Right ventricle myocardium inferior (tissue), 1 donor: ENCODE measurements at regions of chr13 and their contacts with region 1.

Region 1: DNA sequence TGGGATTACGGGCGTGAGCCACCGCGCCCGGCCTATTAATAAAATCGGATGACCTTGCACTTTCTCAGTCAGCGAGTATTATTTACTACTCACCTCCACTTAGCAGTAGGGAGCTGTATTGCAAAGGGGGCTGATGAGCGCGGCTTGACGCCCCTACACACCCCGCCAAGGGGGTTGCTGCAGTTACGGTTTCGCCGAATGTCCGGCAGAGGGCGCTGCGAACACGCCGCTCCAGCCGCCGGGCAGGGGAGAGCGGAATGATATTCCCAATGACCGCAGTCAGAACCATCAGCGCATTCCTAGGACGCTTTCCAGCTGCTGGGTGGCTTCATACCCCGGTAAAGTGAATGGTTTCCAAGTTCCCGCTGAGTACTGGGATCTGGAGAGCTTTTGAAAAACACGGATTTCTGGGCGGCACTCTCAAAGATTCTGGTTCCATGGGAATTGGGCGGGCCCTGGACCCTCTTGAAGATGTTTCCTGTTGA is 30.0 kb upstream of the TPT1 start:
- DNase-seq: peak; percentile 83
- ATAC-seq: peak; percentile 88

Region 2: DNA sequence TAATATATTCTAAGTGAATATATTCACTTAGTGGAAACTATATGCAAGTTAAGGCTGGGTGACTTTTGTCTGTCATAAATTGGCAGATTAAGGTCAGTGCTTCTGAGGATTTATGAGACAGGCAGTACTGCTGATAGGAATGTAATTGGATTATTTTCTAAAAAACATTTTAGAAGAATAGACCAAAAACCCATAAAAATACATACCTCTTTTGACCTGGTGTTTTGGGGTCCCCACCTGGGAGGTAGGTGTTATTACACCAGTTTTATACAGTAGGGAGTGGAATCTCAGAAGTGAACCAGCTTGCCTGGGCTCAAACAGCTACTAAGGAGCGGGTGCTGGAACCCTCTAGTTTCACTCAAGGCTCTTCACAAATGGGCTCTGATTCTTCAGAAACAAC is 119.1 kb after region 1 on chr13:
- intact Hi-C with region 1: loop called (anchors 5 kb)
- DNase-seq: no peak
- ATAC-seq: no peak

Region 3: GRCh38 chr13:45674908-45675307 is 303.9 kb after region 1 on chr13:
- intact Hi-C with region 1: no loop called
- DNase-seq: no peak
- ATAC-seq: no peak